CD8-positive, alpha-beta T cell (primary cell): ENCODE measurements at regions of chr20 and their contacts with region 1.

Region 1: DNA sequence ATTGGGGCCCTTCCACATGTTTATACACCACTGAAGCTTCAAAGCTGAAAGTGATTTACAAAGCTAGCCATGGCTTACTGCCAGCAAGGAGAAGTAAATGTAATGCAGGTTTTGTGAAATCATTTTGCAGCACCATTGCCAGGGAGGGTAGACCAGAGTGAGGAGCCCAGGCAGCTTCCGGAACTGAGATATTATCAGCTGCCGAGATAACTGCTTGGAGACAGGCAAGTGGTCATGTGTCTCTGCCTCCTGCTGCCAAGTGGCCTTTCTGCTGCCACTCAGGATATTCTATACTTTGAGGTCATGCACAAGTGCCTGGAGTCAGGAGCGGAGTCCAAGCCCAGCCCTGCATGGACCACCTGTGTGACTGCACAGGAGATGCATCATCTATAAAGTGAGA is 160.2 kb downstream of the SYNDIG1 start:
- DNase-seq: peak in 1 of 9 experiments; percentile 42
- ATAC-seq: no peak
- H3K4me3 ChIP-seq: no peak overlapping the region
- H3K4me3 Mint-ChIP-seq: no peak overlapping the region
- H3K27ac ChIP-seq: no peak overlapping the region
- H3K27ac Mint-ChIP-seq: no peak overlapping the region
- H3K4me1 ChIP-seq: peaks cover 8% of the 10 kb centered on the region
- H3K4me1 Mint-ChIP-seq: peaks cover 14% of the 10 kb centered on the region
- H3K27me3 ChIP-seq: no peaks in the 10 kb centered on the region
- H3K27me3 Mint-ChIP-seq: no peaks in the 10 kb centered on the region
- CTCF ChIP-seq: no peak

Region 2: DNA sequence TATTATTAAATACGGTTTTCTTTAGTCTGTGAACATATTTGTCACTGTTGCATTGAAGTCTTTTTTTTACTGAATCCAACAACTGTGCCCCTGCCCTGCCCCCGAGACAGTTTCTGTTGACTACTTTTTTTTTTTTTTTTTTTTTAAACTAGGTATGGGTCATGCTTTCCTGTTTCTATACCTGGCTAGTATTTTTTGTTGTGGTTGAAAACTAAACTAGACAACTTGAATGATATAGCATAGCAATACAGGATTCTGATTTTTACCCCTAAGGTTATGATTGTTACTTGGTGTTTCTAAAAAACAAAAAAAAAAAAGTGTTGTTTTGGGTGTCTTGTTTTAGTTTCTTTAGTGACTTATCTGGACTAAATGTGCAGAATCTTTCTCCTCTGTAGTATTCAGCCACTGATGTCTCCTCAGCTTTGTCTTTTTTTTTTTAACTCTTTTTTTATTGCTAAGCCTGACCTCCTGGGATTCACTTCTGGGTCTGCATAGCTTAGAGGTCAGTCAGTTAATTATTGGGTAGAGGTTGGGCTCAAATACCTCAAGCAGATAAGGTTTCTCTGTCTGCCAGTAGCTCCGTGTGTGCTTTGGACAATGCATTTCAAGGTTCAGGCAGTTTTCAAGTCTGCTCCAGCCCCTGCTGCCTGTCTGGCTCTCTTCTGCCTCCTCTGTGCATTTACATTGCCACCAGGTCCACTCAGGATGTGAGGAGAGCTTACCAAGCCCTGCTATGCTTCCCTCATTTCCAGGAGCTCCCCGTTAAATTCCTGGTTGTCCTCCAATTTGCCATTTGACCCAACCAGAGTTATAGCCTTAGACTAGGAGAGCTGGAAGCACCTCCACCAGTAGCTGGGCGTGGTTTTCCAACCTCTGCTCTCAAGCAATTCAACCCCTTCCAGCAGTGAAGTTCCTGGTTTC is 68.8 kb before region 1 on chr20:
- CTCF ChIA-PET with region 1: no interaction called
- POLR2A ChIA-PET with region 1: no interaction called
- intact Hi-C with region 1: loop called in 1 of 2 experiments (anchors 10 kb)
- DNase-seq: no peak
- ATAC-seq: no peak
- H3K4me3 ChIP-seq: no peak overlapping the region
- H3K4me3 Mint-ChIP-seq: no peak overlapping the region
- H3K27ac ChIP-seq: no peak overlapping the region
- H3K27ac Mint-ChIP-seq: no peak overlapping the region
- H3K4me1 ChIP-seq: no peaks in the 10 kb centered on the region
- H3K4me1 Mint-ChIP-seq: no peaks in the 10 kb centered on the region
- H3K27me3 ChIP-seq: no peaks in the 10 kb centered on the region
- H3K27me3 Mint-ChIP-seq: peaks cover 3% of the 10 kb centered on the region
- CTCF ChIP-seq: no peak

Region 3: DNA sequence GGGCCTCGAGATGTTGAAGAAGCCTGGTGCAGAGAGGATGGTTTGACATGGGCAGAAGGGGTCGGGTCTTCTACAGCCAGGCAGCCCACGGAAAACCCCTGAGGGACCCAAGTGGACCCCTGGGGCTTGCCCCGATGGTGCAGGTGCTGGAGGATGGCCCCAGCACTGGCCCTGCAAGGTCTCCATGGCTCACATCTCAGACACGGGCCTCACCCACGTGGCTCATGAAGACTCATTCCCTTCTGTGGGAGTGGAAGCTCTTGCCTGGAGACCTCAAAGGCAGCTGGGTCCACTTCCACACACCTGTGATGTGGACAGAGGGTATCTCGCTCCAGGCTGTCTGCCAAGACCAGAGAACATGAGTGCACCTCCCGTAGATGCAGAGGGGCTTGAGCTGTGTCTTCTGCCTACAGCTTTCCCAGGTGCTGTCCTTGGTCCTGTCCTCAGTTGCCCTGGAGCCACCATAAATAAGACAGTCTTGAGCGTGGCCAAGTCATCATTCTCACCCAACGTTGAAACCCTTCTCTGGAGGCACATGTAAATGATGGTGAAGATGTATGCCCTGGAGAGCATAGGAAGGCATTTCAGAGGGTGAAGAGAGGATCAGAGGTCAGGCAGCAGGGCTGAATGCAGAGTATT is 52.3 kb before region 1 on chr20:
- CTCF ChIA-PET with region 1: no interaction called
- POLR2A ChIA-PET with region 1: no interaction called
- intact Hi-C with region 1: no loop called
- DNase-seq: no peak
- ATAC-seq: no peak
- H3K4me3 ChIP-seq: no peak overlapping the region
- H3K4me3 Mint-ChIP-seq: no peak overlapping the region
- H3K27ac ChIP-seq: no peak overlapping the region
- H3K27ac Mint-ChIP-seq: no peak overlapping the region
- H3K4me1 ChIP-seq: no peaks in the 10 kb centered on the region
- H3K4me1 Mint-ChIP-seq: no peaks in the 10 kb centered on the region
- H3K27me3 ChIP-seq: no peaks in the 10 kb centered on the region
- H3K27me3 Mint-ChIP-seq: no peaks in the 10 kb centered on the region
- CTCF ChIP-seq: no peak

Region 4: GRCh38 chr20:24608926-24609667 is 20.6 kb before region 1 on chr20:
- CTCF ChIA-PET with region 1: no interaction called
- POLR2A ChIA-PET with region 1: no interaction called
- intact Hi-C with region 1: no loop called
- DNase-seq: no peak
- ATAC-seq: no peak
- H3K4me3 ChIP-seq: no peak overlapping the region
- H3K4me3 Mint-ChIP-seq: no peak overlapping the region
- H3K27ac ChIP-seq: no peak overlapping the region
- H3K27ac Mint-ChIP-seq: no peak overlapping the region
- H3K4me1 ChIP-seq: no peaks in the 10 kb centered on the region
- H3K4me1 Mint-ChIP-seq: no peaks in the 10 kb centered on the region
- H3K27me3 ChIP-seq: no peaks in the 10 kb centered on the region
- H3K27me3 Mint-ChIP-seq: peaks cover 7% of the 10 kb centered on the region
- CTCF ChIP-seq: no peak